Activated T-helper 2 cell treated with anti-CD3 and anti-CD28 coated beads, Interferon-gamma antibody, Interleukin-2, Interleukin-4, amounts not matched to agents 10 μg/mL and 5 μg/mL and 100 μg/mL, durations not matched to agents 14 hours and 24 hours and 36 hours (primary cell): ENCODE measurements at regions of chr4 and their contacts with region 1.

Region 1: DNA sequence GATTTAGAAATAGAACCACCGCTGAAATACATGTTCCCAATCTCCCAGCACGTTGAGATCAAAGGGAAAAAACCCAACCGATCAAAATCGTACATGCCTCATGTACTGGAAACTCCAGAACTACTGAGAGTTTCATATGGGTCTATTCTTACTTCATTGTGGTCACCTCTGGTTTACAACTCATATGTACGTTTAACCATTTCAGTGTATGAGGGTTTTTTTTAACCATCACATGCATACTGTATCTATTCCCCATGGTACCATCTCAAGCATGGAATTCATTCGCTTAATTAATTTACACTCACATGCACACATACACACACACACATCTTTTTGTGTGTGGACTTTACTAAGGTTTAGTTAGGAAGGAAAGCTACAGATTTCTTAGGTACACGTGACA is 46.0 kb upstream of the CLNK start:
- DNase-seq: no peak
- H3K4me3 Mint-ChIP-seq: peak overlapping the region; percentile 17
- H3K27ac Mint-ChIP-seq: peak overlapping the region; percentile 90
- H3K4me1 Mint-ChIP-seq: peaks cover 76% of the 10 kb centered on the region
- H3K27me3 Mint-ChIP-seq: no peaks in the 10 kb centered on the region

Region 2: DNA sequence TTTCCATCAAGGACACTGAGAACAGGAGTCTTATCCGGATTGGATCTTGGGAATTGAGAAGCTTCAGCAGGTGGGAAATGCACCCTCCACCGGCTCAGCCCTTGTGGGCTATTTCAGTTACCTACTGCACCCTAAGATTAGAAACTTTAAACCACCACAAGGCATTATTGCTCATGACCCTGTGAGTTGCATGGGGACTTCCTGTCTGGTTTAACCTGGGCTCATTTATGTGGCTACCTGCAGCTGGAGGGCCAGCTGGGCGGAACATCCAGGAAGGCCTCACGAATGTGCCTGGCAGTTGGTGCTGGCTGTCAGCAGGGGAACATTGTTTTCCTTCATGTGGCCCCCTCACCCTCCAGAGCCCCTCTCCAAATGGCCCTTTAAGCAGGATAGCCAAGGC is 1122.3 kb before region 1 on chr4:
- intact Hi-C with region 1: loop called (anchors 10 kb)
- DNase-seq: no peak
- H3K4me3 Mint-ChIP-seq: no peak overlapping the region
- H3K27ac Mint-ChIP-seq: no peak overlapping the region
- H3K4me1 Mint-ChIP-seq: peaks cover 41% of the 10 kb centered on the region
- H3K27me3 Mint-ChIP-seq: no peaks in the 10 kb centered on the region

Region 3: DNA sequence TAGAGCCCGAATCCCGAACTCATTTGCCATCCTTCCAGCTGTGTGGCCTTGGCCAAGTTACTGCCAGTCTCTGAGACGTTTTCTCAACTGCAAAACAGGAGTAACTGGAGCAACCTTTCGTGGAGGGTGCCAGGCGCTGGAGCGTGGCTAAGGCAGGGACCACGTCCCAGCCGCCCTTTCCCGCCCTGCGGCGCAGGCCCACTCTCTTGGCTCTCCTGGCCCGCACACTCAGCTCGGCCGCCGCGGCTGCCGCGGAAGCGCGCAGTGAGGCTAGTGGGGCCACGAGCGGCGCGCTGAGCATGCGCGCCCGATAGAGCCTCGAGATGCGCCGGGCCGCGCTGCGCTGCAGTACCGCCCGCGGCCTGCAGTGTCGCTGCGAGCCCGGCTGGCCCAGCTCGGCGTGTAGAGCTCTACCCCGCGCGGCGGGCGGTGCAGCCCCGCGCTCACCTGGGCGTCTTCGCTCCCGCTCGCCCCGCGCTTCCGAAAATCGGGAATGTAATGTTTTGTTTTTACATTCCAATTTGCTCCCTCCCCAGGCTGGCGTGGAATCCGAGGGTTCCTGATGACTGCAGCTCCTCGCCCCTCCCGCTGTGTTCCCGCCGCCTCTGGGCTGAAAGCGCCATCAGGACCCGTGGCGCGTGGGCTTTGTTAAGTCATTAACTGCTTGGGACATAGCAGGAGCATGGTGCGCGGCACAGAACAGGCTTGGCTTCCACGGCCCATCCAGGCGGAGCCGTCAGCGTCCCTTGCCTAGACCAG is 269.3 kb before region 1 on chr4:
- intact Hi-C with region 1: loop called (anchors 5 kb)
- DNase-seq: peak; percentile 75
- H3K4me3 Mint-ChIP-seq: peak overlapping the region; percentile 75
- H3K27ac Mint-ChIP-seq: no peak overlapping the region
- H3K4me1 Mint-ChIP-seq: peaks cover 23% of the 10 kb centered on the region
- H3K27me3 Mint-ChIP-seq: peaks cover 41% of the 10 kb centered on the region

Region 4: DNA sequence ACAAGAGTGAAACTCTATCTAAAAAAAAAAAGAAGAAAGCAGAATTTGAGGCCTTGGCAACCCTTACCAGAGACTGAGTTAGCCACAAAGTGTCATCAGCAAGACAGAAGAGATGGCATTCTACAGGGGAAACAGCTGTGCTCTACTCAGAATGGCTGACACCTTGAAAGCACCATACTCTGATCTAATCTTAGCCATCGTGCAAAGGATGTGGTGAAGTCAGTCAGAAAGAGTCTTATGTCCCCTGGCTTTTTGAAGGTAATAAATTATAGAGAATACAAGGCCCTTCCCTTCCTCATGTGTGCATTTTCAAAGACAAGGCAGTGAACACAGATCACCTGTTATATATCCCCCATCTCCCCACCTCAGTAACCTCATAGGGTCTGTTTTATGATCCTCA is 59.2 kb before region 1 on chr4:
- intact Hi-C with region 1: loop called (anchors 1 kb)
- DNase-seq: peak; percentile 59
- H3K4me3 Mint-ChIP-seq: peak overlapping the region; percentile 1
- H3K27ac Mint-ChIP-seq: peak overlapping the region; percentile 77
- H3K4me1 Mint-ChIP-seq: peaks cover 47% of the 10 kb centered on the region
- H3K27me3 Mint-ChIP-seq: no peaks in the 10 kb centered on the region

Region 5: GRCh38 chr4:10893395-10893794 is 162.8 kb after region 1 on chr4:
- intact Hi-C with region 1: loop called (anchors 5 kb)
- DNase-seq: no peak
- H3K4me3 Mint-ChIP-seq: no peak overlapping the region
- H3K27ac Mint-ChIP-seq: no peak overlapping the region
- H3K4me1 Mint-ChIP-seq: peaks cover 22% of the 10 kb centered on the region
- H3K27me3 Mint-ChIP-seq: peaks cover 4% of the 10 kb centered on the region

Region 6: DNA sequence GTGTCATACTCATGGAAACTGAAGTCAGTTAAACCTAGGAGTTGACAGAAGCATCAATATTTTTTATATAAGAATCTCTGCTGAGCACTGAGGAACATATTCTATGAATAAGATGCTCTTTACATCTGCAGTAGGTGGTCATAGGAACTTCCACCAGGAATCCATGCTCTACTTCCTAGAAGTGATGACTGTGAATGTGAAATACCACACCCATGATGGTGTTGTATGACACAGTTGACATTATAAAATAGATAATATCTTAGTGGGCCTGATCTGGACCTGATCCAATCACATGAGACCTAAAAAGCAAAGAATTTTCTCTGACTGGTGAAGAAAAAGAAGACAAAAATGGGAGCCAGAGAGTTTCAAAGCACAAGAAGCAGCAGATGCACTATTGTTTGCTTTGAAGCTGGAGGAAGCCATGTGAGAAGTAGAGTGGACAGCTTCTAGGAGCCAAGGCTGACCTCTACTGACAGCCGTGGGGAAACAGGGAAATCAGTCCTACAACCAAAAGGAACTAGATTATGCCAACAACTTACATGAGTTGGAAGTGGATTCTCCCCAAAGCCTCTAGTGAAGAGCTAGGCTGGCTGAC is 766.7 kb after region 1 on chr4:
- intact Hi-C with region 1: loop called (anchors 1 kb)
- DNase-seq: no peak
- H3K4me3 Mint-ChIP-seq: no peak overlapping the region
- H3K27ac Mint-ChIP-seq: peak overlapping the region; percentile 67
- H3K4me1 Mint-ChIP-seq: peaks cover 24% of the 10 kb centered on the region
- H3K27me3 Mint-ChIP-seq: peaks cover 6% of the 10 kb centered on the region